GM13976 (cell line): ENCODE measurements at regions of chr3 and their contacts with region 1.

Region 1: DNA sequence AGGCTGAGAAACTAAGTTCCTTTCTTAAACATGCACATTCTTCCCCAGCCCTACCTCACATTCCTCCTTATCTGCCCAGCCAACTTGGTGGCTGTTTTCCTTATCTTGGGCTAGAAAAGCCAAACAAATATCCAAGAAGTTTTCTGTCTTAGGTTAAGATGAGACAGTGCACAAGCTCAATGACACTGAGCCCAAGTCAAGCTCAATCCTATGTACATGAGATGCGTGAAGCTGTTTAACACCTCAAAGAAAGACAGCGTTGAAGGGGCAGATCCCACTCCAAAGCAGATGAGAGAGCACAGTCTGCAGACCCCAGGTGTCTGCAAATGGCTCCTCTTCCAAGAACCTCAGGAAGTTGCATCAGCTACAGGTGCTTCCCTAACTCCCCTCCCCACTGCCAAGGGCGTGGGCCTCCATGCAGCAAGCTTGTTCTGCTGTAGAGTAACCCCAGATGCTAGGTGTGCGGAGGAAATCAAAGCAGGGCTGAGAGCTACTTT is 16.6 kb downstream of the LRRC2 start:
- DNase-seq: no peak
- CTCF ChIP-seq: no peak

Region 2: DNA sequence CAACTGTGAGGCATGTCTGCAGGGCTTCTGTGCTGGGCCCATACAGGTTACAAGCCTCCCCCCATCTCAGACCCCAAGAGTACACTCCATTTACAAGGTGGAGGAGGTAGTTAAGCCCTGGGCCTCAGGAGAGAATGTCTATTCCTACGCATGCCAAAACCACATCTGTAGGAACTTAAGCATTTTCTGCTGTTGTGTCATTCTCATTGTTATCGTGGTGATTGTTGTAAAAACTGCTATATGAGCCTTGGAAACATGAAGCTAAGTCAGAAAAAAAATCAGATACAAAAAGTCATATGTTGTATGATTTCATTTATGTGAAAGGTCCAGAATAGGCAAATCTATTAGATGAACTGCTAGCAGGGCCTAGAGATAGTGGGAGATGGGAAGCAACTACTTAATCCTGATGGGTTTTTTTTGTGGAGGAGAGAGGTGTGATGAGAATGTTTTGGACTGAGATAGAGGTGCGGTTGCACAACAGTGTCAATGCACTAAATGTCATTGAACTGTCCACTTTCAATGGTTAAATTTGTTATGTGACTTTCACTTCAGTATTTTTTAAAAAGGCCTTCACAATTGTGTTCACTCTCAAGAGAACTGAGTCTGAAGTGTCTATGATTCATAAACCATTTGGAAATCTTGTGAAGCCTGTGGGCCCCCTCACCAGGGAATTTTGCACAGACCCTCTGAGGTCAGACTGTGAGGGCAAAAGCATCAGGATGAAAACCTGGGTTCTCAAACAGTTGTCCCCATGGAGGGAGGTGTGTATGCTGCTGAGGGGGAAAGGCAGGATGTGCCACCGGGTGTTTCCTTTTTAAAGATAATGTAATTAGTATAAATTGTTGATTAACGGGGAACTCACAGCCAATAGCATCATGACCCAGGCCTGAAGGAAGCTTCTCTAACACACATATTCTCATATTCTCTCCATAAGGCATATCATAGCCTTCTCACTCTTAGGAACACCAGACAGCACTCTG is 48.5 kb before region 1 on chr3:
- in situ Hi-C with region 1: loop called (anchors 5 kb)
- DNase-seq: no peak
- CTCF ChIP-seq: no peak